AG04450 (cell line): ENCODE measurements at regions of chr11 and their contacts with region 1.

Region 1: DNA sequence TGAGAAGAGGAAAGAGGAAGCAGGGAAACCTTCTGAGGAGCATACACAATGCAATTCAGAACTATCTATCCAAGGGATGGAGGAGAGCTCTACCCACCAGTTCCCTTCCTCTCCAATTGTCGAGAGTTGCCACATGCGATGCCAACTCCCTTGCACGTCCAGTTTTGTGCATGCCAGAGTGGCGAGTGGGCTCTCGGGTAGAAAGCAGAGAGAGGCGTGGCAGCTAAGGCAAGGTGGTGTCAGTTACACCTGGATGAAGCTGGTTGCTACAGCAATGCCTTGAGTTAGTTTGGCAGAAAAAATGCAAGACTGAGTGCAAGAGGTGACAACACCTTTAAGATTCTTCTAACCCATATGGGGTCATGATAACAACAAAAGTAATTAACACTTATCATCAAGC is 420.4 kb upstream of the CCDC90B start:
- DNase-seq: no peak
- H3K4me3 ChIP-seq: no peak overlapping the region
- H3K27ac ChIP-seq: no peak overlapping the region
- H3K27me3 ChIP-seq: peaks cover 3% of the 10 kb centered on the region
- CTCF ChIP-seq: no peak

Region 2: GRCh38 chr11:82790723-82791484 is 915.7 kb before region 1 on chr11:
- CTCF ChIA-PET with region 1: interaction called, 10 read pairs
- POLR2A ChIA-PET with region 1: no interaction called
- DNase-seq: no peak
- H3K4me3 ChIP-seq: no peak overlapping the region
- H3K27ac ChIP-seq: no peak overlapping the region
- H3K27me3 ChIP-seq: no peaks in the 10 kb centered on the region
- CTCF ChIP-seq: no peak